Mammary epithelial cell (primary cell): ENCODE measurements at regions of chr19 and their contacts with region 1.

Region 1: DNA sequence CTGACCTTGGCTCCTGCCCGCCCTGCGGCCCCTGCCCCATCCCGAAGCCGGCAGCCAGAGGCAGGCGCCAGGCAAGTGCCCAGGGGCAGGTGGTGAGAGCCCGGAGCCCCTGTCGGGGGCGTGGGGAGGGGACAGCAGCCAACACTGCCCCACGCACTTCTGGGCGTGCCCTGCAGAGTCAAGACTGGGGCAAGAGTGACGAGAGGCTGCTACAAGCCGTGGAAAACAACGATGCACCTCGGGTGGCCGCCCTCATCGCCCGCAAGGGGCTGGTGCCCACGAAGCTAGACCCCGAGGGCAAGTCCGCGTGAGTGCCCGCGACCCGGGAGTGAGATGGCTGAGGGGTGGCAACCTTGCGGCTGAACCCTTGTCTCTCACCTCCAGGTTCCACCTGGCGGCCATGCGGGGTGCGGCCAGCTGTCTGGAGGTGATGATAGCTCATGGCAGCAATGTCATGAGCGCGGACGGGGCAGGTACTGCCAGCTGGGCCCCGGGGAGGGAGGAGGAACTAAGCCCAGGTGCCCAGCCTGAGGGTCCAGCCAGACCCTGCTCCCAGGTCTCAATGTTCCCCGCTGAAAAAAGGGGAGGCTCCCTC is 17.3 kb downstream of the ANKRD24 start:
- DNase-seq: no peak
- H3K4me3 ChIP-seq: no peak overlapping the region
- H3K27ac ChIP-seq: no peak overlapping the region
- H3K4me1 ChIP-seq: no peaks in the 10 kb centered on the region
- H3K27me3 ChIP-seq: peaks cover 5% of the 10 kb centered on the region
- CTCF ChIP-seq: peak in 1 of 2 donors; percentile 38

Region 2: DNA sequence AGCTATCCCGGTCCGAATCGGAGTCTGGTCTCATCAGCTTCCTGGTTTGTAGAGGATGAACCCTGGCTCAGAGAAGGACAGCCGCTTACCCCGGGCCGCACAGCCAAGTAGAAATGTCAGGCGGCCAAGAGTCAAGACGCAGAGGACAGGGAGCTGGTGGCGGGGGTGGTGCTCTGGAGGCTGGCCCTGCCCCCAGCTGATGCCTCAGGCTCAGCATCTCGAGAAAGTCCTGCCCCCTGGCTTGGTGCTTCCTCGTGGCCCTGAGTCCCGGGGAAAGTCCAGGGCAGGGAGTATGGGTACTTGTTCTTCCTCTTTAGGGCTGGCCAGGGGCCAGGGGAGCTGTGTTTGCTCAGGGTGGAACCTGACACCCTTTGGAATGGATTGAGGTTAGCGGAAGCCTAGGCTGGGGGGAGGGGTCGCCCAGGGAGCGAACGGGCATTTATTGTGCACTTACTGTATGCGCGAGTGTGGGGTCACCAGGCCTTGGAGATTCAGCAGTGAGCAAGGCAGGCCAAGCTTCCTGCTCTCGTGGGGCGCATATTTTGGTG is 489.5 kb before region 1 on chr19:
- CTCF ChIA-PET with region 1: no interaction called
- dilution Hi-C with region 1: loop called (anchors 5 kb)
- in situ Hi-C with region 1: no loop called
- intact Hi-C with region 1: no loop called
- DNase-seq: peak; percentile 64
- H3K4me3 ChIP-seq: no peak overlapping the region
- H3K27ac ChIP-seq: no peak overlapping the region
- H3K4me1 ChIP-seq: peaks cover 13% of the 10 kb centered on the region
- H3K27me3 ChIP-seq: no peaks in the 10 kb centered on the region
- CTCF ChIP-seq: no peak

Region 3: DNA sequence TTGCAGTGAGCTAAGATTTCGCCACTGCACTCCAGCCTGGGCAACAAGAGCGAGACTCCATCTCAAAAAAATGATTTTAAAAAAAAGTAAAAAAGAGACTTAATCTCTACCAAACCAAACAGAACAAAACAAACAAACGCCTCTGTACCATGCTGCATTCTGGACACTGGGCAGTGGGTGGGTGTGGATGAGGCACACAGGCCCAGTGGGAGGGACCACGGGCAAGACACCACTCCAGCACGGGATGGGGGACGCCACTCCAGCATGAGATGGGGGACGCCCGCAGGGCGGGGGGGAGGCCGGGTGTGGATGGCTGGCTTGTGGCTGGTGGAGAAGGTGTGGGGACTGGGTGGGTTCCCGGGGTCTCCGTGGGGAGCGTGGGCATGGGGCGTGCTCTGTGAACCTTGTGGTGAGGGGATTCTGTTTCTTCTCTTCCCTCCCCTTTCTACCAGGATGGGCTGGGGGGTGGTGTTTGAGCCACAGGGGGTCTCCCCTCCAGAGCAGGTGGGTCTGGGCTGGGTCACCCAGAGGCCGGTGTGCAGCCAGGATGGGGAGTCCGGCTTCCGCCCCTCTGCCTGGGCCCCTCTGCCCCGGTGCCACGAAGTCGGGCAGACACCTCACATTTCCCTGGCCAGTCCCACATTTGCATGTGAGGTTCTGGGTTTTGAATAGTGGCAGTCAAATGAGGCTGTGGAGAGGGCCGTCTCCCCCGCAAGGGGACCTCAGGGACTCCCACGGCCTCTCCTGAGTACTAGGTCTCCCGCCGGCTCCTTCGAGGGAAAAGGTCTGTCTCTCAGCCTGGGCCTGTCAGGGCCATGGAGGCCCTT is 389.7 kb before region 1 on chr19:
- CTCF ChIA-PET with region 1: no interaction called
- dilution Hi-C with region 1: loop called (anchors 5 kb)
- in situ Hi-C with region 1: no loop called
- intact Hi-C with region 1: no loop called
- DNase-seq: no peak
- H3K4me3 ChIP-seq: no peak overlapping the region
- H3K27ac ChIP-seq: no peak overlapping the region
- H3K4me1 ChIP-seq: no peaks in the 10 kb centered on the region
- H3K27me3 ChIP-seq: no peaks in the 10 kb centered on the region
- CTCF ChIP-seq: no peak

Region 4: GRCh38 chr19:4144666-4145256 is 55.0 kb before region 1 on chr19:
- CTCF ChIA-PET with region 1: interaction called, 5 read pairs
- dilution Hi-C with region 1: loop called (anchors 5 kb)
- in situ Hi-C with region 1: no loop called
- intact Hi-C with region 1: loop called (anchors 2 kb)
- DNase-seq: no peak
- H3K4me3 ChIP-seq: no peak overlapping the region
- H3K27ac ChIP-seq: no peak overlapping the region
- H3K4me1 ChIP-seq: peaks cover 4% of the 10 kb centered on the region
- H3K27me3 ChIP-seq: no peaks in the 10 kb centered on the region
- CTCF ChIP-seq: no peak

Region 5: DNA sequence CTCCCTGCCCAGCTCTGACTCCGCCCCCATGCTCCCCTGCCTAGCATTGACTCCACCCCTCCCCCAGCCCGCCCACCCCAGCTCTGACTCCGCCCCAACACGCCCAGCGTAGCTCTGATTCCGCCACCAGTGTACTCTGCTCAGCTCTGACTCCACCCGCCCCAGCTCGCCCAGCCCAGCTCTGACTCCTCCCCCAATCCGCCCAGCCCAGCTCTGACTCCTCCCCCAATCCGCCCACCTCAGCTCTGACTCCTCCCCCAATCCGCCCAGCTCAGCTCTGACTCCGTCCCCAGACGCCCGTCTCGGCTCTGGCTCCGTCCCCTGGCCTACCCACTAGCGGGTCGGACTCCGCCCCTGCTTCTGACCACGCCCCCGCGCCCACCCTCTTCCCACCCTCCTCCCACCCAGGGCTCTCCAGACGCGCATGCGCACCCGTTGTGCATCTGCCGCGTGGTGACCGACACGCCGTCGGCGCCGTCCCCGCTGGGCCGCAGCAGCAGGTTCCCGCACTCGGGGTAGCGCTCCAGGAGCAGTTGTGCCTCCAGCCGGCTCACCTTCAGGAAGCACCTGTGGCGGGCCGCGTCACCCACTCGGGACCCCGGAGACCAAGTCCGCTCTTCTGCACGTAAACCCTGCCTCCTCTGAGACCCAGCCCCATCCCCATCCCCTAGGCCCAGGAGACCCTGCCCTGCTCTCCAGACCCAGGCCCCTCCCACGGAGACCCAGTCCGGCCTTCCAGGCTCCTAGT is 128.6 kb after region 1 on chr19:
- CTCF ChIA-PET with region 1: no interaction called
- dilution Hi-C with region 1: loop called (anchors 5 kb)
- in situ Hi-C with region 1: no loop called
- intact Hi-C with region 1: no loop called
- DNase-seq: no peak
- H3K4me3 ChIP-seq: peak overlapping the region in 2 of 3 experiments; percentile 37 to 46
- H3K27ac ChIP-seq: no peak overlapping the region
- H3K4me1 ChIP-seq: peaks cover 3% of the 10 kb centered on the region
- H3K27me3 ChIP-seq: no peaks in the 10 kb centered on the region
- CTCF ChIP-seq: no peak